GM12878 (cell line): ENCODE measurements at regions of chr3 and their contacts with region 1.

Region 1: GRCh38 chr3:78978037-78978436 is 789.8 kb downstream of the ROBO1 start:
- DNase-seq: no peak
- ATAC-seq: peak; percentile 38; the same call in 1 of the 3 replicates
- H3K4me3 ChIP-seq: no peak overlapping the region
- H3K27ac ChIP-seq: no peak overlapping the region
- H3K4me1 ChIP-seq: no peaks in the 10 kb centered on the region
- H3K27me3 ChIP-seq: no peaks in the 10 kb centered on the region
- CTCF ChIP-seq: peak in 1 of 3 experiments; percentile 1; a peak in 1 of 6 replicates
- EP300 ChIP-seq: no peak
- POLR2A ChIP-seq: no peak
- RAD21 ChIP-seq: peak; percentile 10; the same call in 1 of the 2 replicates

Region 2: GRCh38 chr3:78666470-78666800 is 311.6 kb before region 1 on chr3:
- CTCF ChIA-PET with region 1: interaction called, 11 read pairs
- POLR2A ChIA-PET with region 1: no interaction called
- RAD21 ChIA-PET with region 1: interaction called, 4 read pairs
- SMC1A ChIA-PET with region 1: interaction called, 11 read pairs
- in situ Hi-C with region 1: no loop called
- intact Hi-C with region 1: no loop called
- DNase-seq: no peak
- ATAC-seq: no peak
- H3K4me3 ChIP-seq: no peak overlapping the region
- H3K27ac ChIP-seq: no peak overlapping the region
- H3K4me1 ChIP-seq: no peaks in the 10 kb centered on the region
- H3K27me3 ChIP-seq: no peaks in the 10 kb centered on the region
- CTCF ChIP-seq: no peak
- EP300 ChIP-seq: no peak
- POLR2A ChIP-seq: no peak
- RAD21 ChIP-seq: no peak

Region 3: DNA sequence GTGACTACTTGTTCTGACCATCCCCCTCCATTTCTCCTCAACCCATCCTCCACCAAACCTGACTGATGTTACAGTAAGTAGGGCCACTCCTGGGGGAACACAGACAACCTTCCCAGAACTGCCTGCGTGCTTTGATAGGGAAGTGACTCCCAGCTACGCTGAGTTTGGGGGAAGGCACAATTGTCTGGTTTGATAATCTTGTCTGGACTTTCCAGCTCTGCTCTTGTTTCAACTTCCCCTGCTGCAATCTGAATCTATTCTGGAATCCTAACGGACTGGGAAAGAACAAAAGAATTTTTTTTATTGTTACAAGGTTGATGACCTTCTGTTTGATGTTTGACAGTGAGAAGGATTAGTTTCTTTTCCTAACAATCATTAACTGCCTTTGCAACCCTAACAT is 105.8 kb before region 1 on chr3:
- CTCF ChIA-PET with region 1: interaction called, 6 read pairs
- POLR2A ChIA-PET with region 1: no interaction called
- RAD21 ChIA-PET with region 1: interaction called, 8 read pairs
- SMC1A ChIA-PET with region 1: interaction called, 9 read pairs
- in situ Hi-C with region 1: no loop called
- intact Hi-C with region 1: loop called (anchors 5 kb)
- DNase-seq: no peak
- ATAC-seq: peak; percentile 20; the same call in 2 of the 3 replicates
- H3K4me3 ChIP-seq: no peak overlapping the region
- H3K27ac ChIP-seq: 0 out of 2 replicates have a peak overlapping the region, but pooled peaks have one; percentile 4
- H3K4me1 ChIP-seq: no peaks in the 10 kb centered on the region
- H3K27me3 ChIP-seq: no peaks in the 10 kb centered on the region
- CTCF ChIP-seq: no peak
- EP300 ChIP-seq: no peak; a peak in 1 of 4 replicates
- POLR2A ChIP-seq: no peak
- RAD21 ChIP-seq: no peak

Region 4: GRCh38 chr3:78941587-78941986 is 36.5 kb before region 1 on chr3:
- CTCF ChIA-PET with region 1: interaction called, 12 read pairs
- POLR2A ChIA-PET with region 1: no interaction called
- RAD21 ChIA-PET with region 1: interaction called, 3 read pairs
- SMC1A ChIA-PET with region 1: interaction called, 12 read pairs
- in situ Hi-C with region 1: no loop called
- intact Hi-C with region 1: no loop called
- DNase-seq: no peak
- ATAC-seq: peak; percentile 65
- H3K4me3 ChIP-seq: no peak overlapping the region
- H3K27ac ChIP-seq: no peak overlapping the region
- H3K4me1 ChIP-seq: no peaks in the 10 kb centered on the region
- H3K27me3 ChIP-seq: no peaks in the 10 kb centered on the region
- CTCF ChIP-seq: no peak
- EP300 ChIP-seq: no peak
- POLR2A ChIP-seq: no peak
- RAD21 ChIP-seq: no peak

Region 5: DNA sequence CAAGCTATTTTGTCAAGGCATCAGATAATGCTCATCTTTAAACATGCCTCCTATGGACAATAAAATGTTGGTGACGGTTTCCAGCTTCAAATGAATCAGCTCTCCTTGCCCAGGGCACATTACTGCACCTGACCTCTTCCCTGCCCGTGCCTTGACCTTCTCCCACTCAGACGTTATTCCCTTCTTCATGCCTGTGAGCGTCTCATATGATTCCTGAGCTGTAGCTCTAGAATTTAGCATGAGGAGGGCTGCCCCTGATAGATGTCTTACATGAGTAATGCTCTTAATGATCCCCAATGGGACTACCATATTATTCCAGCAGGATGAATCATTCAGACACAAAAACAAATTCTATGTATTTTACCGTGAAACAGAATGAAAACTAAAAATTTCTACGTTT is 27.0 kb after region 1 on chr3:
- CTCF ChIA-PET with region 1: interaction called, 3 read pairs
- POLR2A ChIA-PET with region 1: interaction called, 4 read pairs
- RAD21 ChIA-PET with region 1: interaction called, 4 read pairs
- SMC1A ChIA-PET with region 1: interaction called, 12 read pairs
- in situ Hi-C with region 1: no loop called
- intact Hi-C with region 1: no loop called
- DNase-seq: no peak
- ATAC-seq: no peak
- H3K4me3 ChIP-seq: no peak overlapping the region
- H3K27ac ChIP-seq: no peak overlapping the region
- H3K4me1 ChIP-seq: no peaks in the 10 kb centered on the region
- H3K27me3 ChIP-seq: no peaks in the 10 kb centered on the region
- CTCF ChIP-seq: no peak
- EP300 ChIP-seq: no peak
- POLR2A ChIP-seq: no peak
- RAD21 ChIP-seq: no peak

Region 6: DNA sequence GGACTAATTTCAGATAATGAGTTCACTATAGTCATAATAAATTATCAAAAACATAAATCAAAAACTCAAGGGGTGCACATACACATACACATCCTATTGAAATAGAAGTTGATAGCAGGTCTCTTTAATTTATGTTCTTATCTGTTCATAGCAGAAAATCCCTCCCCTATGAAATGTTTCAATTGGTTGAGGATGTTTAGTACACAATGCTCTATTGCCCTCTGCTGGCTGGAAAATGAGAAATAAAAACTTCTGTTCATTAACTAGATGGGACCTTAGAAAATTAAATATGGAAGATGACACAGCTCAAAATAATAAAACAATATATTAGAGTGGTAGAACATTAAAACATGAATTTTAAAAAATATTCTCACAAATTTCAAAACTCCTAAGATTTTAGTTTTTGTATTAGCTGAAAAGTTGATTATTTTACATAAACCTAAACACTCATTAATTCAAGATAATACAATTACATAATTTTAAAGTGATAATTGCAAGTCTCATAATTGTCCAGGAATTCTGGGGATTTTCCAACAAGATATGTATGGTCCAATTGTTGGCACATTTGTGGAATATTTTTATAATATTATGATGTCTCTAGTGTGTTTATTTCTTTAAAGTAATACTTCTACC is 54.8 kb after region 1 on chr3:
- CTCF ChIA-PET with region 1: interaction called, 18 read pairs
- POLR2A ChIA-PET with region 1: no interaction called
- RAD21 ChIA-PET with region 1: interaction called, 6 read pairs
- SMC1A ChIA-PET with region 1: interaction called, 6 read pairs
- in situ Hi-C with region 1: no loop called
- intact Hi-C with region 1: no loop called
- DNase-seq: no peak
- ATAC-seq: peak; percentile 78
- H3K4me3 ChIP-seq: no peak overlapping the region
- H3K27ac ChIP-seq: no peak overlapping the region
- H3K4me1 ChIP-seq: no peaks in the 10 kb centered on the region
- H3K27me3 ChIP-seq: no peaks in the 10 kb centered on the region
- CTCF ChIP-seq: peak; percentile 35 to 59 (median 35); a peak in 5 of 6 replicates
- EP300 ChIP-seq: no peak
- POLR2A ChIP-seq: no peak
- RAD21 ChIP-seq: peak; percentile 77

Region 7: GRCh38 chr3:79063624-79064023 is 85.6 kb after region 1 on chr3:
- CTCF ChIA-PET with region 1: no interaction called
- POLR2A ChIA-PET with region 1: no interaction called
- RAD21 ChIA-PET with region 1: no interaction called
- SMC1A ChIA-PET with region 1: no interaction called
- in situ Hi-C with region 1: no loop called
- intact Hi-C with region 1: no loop called
- DNase-seq: no peak
- ATAC-seq: no peak
- H3K4me3 ChIP-seq: no peak overlapping the region
- H3K27ac ChIP-seq: no peak overlapping the region
- H3K4me1 ChIP-seq: no peaks in the 10 kb centered on the region
- H3K27me3 ChIP-seq: no peaks in the 10 kb centered on the region
- CTCF ChIP-seq: no peak
- EP300 ChIP-seq: no peak
- POLR2A ChIP-seq: no peak
- RAD21 ChIP-seq: no peak

Region 8: GRCh38 chr3:79329154-79329553 is 351.1 kb after region 1 on chr3:
- CTCF ChIA-PET with region 1: no interaction called
- POLR2A ChIA-PET with region 1: no interaction called
- RAD21 ChIA-PET with region 1: no interaction called
- SMC1A ChIA-PET with region 1: no interaction called
- in situ Hi-C with region 1: no loop called
- intact Hi-C with region 1: no loop called
- DNase-seq: no peak
- ATAC-seq: no peak; the same call in 2 of the 3 replicates
- H3K4me3 ChIP-seq: no peak overlapping the region
- H3K27ac ChIP-seq: no peak overlapping the region
- H3K4me1 ChIP-seq: no peaks in the 10 kb centered on the region
- H3K27me3 ChIP-seq: no peaks in the 10 kb centered on the region
- CTCF ChIP-seq: no peak
- EP300 ChIP-seq: no peak
- POLR2A ChIP-seq: no peak
- RAD21 ChIP-seq: no peak

Region 9: DNA sequence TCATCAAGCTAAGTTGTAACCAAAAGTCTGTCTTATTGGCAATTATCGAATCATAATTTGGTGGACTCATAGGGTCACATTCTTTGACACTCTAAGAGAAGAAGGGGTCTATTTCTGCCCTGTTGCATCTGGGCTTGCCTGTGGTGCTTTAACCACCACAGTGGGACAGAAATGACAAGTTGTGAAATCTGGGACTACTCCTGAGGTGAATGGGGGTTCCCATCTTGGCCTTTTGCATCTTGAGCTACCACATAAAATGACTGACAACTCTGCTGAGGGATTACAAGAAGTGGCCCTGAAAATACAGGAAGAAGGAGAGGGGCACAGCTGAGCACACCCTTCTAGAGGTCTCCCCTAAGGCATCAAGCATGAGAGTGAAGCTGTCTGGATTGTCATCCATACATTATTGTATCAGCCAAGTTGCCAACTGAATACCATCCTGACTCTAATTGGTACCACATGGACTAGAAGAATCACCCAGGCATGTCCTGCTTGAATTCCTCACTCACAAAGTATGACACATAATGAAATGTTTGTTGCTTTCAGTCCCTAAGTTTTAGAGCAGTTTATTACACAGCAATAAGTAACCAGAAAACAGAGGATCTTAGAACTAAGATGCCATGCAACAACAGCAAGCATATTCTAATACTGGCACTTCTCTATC is 483.2 kb after region 1 on chr3:
- CTCF ChIA-PET with region 1: no interaction called
- POLR2A ChIA-PET with region 1: no interaction called
- RAD21 ChIA-PET with region 1: no interaction called
- SMC1A ChIA-PET with region 1: no interaction called
- in situ Hi-C with region 1: no loop called
- intact Hi-C with region 1: no loop called
- DNase-seq: no peak
- ATAC-seq: peak; percentile 21; the same call in 2 of the 3 replicates
- H3K4me3 ChIP-seq: no peak overlapping the region
- H3K27ac ChIP-seq: no peak overlapping the region
- H3K4me1 ChIP-seq: no peaks in the 10 kb centered on the region
- H3K27me3 ChIP-seq: no peaks in the 10 kb centered on the region
- CTCF ChIP-seq: no peak
- EP300 ChIP-seq: no peak
- POLR2A ChIP-seq: no peak
- RAD21 ChIP-seq: no peak